Psoas muscle (tissue), 8 donors: ENCODE measurements at regions of chr17 and their contacts with region 1.

Region 1: GRCh38 chr17:1648963-1649843 is 463 bp downstream of the RILP start:
- DNase-seq: peak; percentile 96 to 98
- ATAC-seq: peak; percentile 69 to 76 (median 74)
- H3K4me3 ChIP-seq: peak overlapping the region; percentile 90
- H3K27ac ChIP-seq: peak overlapping the region; percentile 100
- H3K4me1 ChIP-seq: peaks cover 25% of the 10 kb centered on the region
- H3K27me3 ChIP-seq: no peaks in the 10 kb centered on the region
- CTCF ChIP-seq: peak; percentile 85

Region 2: DNA sequence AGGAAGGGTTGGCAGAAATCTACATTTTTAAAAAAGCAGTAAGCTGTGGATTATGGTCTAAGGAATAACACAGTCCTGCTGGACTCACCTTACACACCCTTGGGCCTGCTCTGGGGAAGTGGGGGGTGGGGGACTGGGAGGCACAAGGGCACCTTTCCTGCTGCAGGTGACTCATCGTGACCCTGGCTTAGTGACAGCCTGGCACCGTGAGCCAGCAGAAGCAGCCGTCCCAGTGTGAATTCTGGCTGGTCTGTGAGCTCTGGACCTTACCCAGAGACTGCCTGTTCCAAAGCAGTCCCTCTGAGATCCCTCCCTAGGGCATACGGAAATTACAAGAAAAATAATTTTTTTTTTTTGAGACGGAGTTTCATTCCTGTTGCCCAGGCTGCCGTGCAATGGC is 189.0 kb before region 1 on chr17:
- intact Hi-C with region 1: no loop called
- DNase-seq: peak; percentile 86 to 95
- ATAC-seq: peak; percentile 71 to 74 (median 72)
- H3K4me3 ChIP-seq: no peak overlapping the region
- H3K27ac ChIP-seq: peak overlapping the region; percentile 72
- H3K4me1 ChIP-seq: peaks cover 12% of the 10 kb centered on the region
- H3K27me3 ChIP-seq: no peaks in the 10 kb centered on the region
- CTCF ChIP-seq: no peak

Region 3: DNA sequence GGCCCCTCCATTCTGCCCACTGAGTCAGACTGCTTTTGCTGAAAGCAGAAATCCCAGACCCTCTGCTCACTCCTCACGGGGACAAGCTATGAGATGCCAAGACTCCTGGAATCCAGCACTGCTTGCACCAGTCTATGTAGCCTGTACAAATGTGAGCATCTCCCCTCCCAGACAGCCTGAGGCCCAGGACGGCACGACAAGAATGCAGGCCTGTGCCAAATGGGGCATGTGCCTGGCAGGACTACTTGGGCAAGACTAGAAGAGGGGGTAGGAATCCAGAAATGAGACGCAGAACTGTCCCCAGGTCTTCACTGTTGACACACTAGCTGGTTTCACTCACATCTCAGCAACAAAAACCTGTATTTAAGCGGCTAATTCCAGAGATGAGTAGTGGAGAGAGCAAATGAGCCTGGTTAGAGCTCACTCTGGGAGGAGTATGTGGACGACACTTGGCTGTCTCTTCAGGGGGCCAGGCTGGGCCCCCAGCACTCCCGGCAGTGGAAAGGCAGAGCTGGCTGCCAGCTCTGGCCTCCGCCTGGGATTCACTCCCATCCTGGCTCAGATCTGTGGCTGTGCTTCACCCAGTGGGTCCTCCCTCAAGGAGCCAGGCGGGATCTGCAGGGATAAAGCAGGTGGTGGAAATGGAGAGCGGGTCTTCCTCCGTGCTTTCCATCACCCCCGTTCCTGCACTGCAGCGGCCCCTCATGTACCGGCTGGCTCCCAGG is 153.8 kb before region 1 on chr17:
- intact Hi-C with region 1: no loop called
- DNase-seq: peak; percentile 69 to 91
- ATAC-seq: peak; percentile 79 to 86 (median 84)
- H3K4me3 ChIP-seq: peak overlapping the region; percentile 5
- H3K27ac ChIP-seq: peak overlapping the region; percentile 63
- H3K4me1 ChIP-seq: peaks cover 52% of the 10 kb centered on the region
- H3K27me3 ChIP-seq: no peaks in the 10 kb centered on the region
- CTCF ChIP-seq: no peak

Region 4: GRCh38 chr17:1573916-1574696 is 75.1 kb before region 1 on chr17:
- intact Hi-C with region 1: loop called in 1 of 2 experiments (anchors 5 kb)
- DNase-seq: peak; percentile 90 to 93
- ATAC-seq: peak; percentile 55 to 77 (median 62)
- H3K4me3 ChIP-seq: no peak overlapping the region
- H3K27ac ChIP-seq: peak overlapping the region; percentile 74
- H3K4me1 ChIP-seq: peaks cover 41% of the 10 kb centered on the region
- H3K27me3 ChIP-seq: no peaks in the 10 kb centered on the region
- CTCF ChIP-seq: peak; percentile 98